ENCODE measurements at regions of chr19 and their contacts with region 1.

Region 1: GRCh38 chr19:15225760-15226159 is 6.5 kb downstream of the EPHX3 start:
- DNase-seq: no peak
- ATAC-seq: no peak
- H3K4me3 ChIP-seq: no peak overlapping the region
- H3K27ac ChIP-seq: no peak overlapping the region
- H3K4me1 ChIP-seq: peaks cover 8% of the 10 kb centered on the region
- H3K27me3 ChIP-seq: no peaks in the 10 kb centered on the region
- CTCF ChIP-seq: no peak
- POLR2A ChIP-seq: no peak
- RAD21 ChIP-seq: no peak

Region 2: DNA sequence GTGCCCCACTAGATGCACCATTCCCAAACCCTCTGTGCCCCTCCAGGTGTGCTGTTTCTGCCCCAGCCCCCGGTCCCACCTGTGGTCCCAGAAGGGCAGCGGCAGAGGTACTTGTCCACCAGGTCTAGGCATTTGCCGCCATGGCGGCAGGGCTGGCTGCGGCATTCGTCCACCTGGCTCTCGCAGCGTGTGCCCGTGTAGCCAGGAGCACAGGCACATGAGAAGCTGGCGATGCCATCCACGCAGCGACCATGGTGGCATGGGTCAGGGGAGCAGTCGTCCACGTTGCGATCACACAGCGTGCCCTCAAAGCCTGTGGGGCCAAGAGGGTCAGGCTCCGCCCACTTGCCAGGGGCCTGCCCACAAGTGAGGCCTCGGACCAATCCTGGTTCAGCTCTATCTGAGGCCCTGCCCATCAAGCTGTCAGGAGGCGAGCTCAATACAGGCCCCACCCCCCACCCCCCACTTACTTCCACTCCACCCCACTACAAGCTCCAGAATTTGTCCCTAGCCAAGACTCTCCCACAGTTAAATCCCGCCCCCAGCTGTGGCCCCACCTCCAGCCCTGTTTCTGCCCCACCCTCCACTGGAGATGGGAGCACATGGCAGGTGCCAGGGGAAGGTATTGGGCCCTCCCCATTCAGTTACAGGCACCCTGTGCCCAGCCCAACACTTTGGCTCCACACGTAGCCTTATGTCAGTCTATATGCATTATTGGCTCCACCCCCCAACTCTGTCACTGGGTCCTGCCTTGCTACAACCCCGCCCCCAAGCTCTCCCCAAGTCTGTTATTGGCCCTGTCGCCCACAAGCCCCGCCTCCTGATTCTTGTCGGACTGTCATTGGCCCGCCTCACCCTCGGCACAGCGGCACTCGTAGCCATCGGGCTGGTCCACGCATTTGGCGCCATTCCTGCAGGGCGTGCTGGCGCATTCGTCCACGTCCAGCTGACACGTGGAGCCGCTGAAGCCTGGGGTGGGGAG is 38.4 kb before region 1 on chr19:
- CTCF ChIA-PET with region 1: no interaction called
- POLR2A ChIA-PET with region 1: interaction called, 12 read pairs
- dilution Hi-C with region 1: no loop called
- in situ Hi-C with region 1: no loop called
- intact Hi-C with region 1: no loop called
- DNase-seq: no peak
- ATAC-seq: 0 out of 2 replicates have a peak, but pooled peaks have one; percentile 24
- H3K4me3 ChIP-seq: no peak overlapping the region
- H3K27ac ChIP-seq: no peak overlapping the region
- H3K4me1 ChIP-seq: no peaks in the 10 kb centered on the region
- H3K27me3 ChIP-seq: no peaks in the 10 kb centered on the region
- CTCF ChIP-seq: no peak
- POLR2A ChIP-seq: no peak
- RAD21 ChIP-seq: no peak

Measured in IMR-90 (cell line).